Aorta (tissue), 5 donors: ENCODE measurements at regions of chr15 and their contacts with region 1.

Region 1: GRCh38 chr15:56869573-56869972 is 48.9 kb upstream of the TCF12 start:
- DNase-seq: peak in 1 of 2 donors; percentile 56
- ATAC-seq: no peak
- H3K4me3 ChIP-seq: no peak overlapping the region
- H3K27ac ChIP-seq: no peak overlapping the region
- H3K4me1 ChIP-seq: no peaks in the 10 kb centered on the region
- H3K27me3 ChIP-seq: no peaks in the 10 kb centered on the region

Region 2: GRCh38 chr15:56496635-56497034 is 372.9 kb before region 1 on chr15:
- intact Hi-C with region 1: loop called (anchors 5 kb)
- DNase-seq: no peak
- ATAC-seq: peak; percentile 77
- H3K4me3 ChIP-seq: peak overlapping the region in 1 of 2 donors; percentile 24
- H3K27ac ChIP-seq: no peak overlapping the region
- H3K4me1 ChIP-seq: no peaks in the 10 kb centered on the region
- H3K27me3 ChIP-seq: no peaks in the 10 kb centered on the region

Region 3: DNA sequence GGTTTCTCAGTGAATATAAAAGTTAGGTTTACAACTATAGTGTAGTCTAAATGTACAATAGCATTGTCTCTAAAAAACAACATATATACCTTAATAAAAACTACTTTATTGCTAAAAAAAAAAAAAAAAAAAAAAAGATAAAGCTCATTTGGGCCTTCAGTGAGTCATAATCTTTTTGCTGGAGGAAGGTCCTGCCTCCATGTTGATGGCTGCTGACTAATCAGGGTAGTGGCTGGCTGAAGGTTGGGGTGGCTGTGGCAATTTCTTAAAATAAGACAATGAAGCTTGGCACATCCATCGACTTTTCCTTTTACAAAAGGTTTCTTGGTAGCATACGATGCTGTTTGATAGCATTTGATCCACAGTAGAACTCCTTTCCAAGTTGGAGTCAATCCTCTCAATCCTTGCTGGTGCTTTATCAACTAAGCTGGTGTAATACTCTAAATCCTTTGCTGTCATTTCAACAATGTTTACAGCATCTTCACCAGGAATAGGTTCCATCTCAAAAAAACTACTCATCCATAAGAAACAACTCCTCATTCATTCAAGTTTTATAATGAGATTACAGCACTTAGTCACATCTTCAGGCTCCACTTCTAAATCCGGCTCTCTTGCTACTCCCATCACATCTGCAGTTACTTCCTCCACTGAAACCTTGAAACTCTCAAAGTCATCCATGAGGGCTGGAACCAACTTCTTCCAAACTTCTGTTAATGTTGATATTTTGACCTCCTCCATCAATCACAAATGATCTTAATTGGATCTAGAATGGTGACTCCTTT is 149.6 kb before region 1 on chr15:
- intact Hi-C with region 1: no loop called
- DNase-seq: no peak
- ATAC-seq: no peak
- H3K4me3 ChIP-seq: no peak overlapping the region
- H3K27ac ChIP-seq: no peak overlapping the region
- H3K4me1 ChIP-seq: peaks cover 0 to 2% of the 10 kb centered on the region in 2 donors
- H3K27me3 ChIP-seq: no peaks in the 10 kb centered on the region

Region 4: GRCh38 chr15:56929399-56929798 is 59.8 kb after region 1 on chr15:
- intact Hi-C with region 1: no loop called
- DNase-seq: no peak
- ATAC-seq: no peak
- H3K4me3 ChIP-seq: no peak overlapping the region
- H3K27ac ChIP-seq: no peak overlapping the region
- H3K4me1 ChIP-seq: peaks cover 2 to 13% of the 10 kb centered on the region in 2 donors
- H3K27me3 ChIP-seq: no peaks in the 10 kb centered on the region